ENCODE measurements at regions of chr1 and their contacts with region 1.

Region 1: GRCh38 chr1:119675349-119676345 is 27.6 kb upstream of the ZNF697 start:
- DNase-seq: peak; percentile 92
- H3K4me3 ChIP-seq: peak overlapping the region; percentile 32 to 86 (median 66)
- H3K27ac ChIP-seq: peak overlapping the region; percentile 78
- H3K4me1 ChIP-seq: peaks cover 42% of the 10 kb centered on the region
- H3K27me3 ChIP-seq: peaks cover 4 to 6% of the 10 kb centered on the region in 2 experiments
- CTCF ChIP-seq: peak; percentile 64 to 77
- POLR2A ChIP-seq: no peak

Region 2: GRCh38 chr1:119294722-119295121 is 380.9 kb before region 1 on chr1:
- CTCF ChIA-PET with region 1: no interaction called
- POLR2A ChIA-PET with region 1: no interaction called
- dilution Hi-C with region 1: no loop called
- intact Hi-C with region 1: no loop called
- DNase-seq: no peak
- H3K4me3 ChIP-seq: no peak overlapping the region
- H3K27ac ChIP-seq: no peak overlapping the region
- H3K4me1 ChIP-seq: no peaks in the 10 kb centered on the region
- H3K27me3 ChIP-seq: peaks cover 4 to 7% of the 10 kb centered on the region in 2 experiments
- CTCF ChIP-seq: no peak
- POLR2A ChIP-seq: no peak

Region 3: GRCh38 chr1:119582801-119583200 is 92.8 kb before region 1 on chr1:
- CTCF ChIA-PET with region 1: interaction called, 23 read pairs
- POLR2A ChIA-PET with region 1: no interaction called
- dilution Hi-C with region 1: no loop called
- intact Hi-C with region 1: loop called (anchors 1 kb)
- DNase-seq: peak; percentile 62
- H3K4me3 ChIP-seq: no peak overlapping the region
- H3K27ac ChIP-seq: no peak overlapping the region
- H3K4me1 ChIP-seq: no peaks in the 10 kb centered on the region
- H3K27me3 ChIP-seq: no peaks in the 10 kb centered on the region
- CTCF ChIP-seq: peak; percentile 54 to 67
- POLR2A ChIP-seq: no peak

Region 4: GRCh38 chr1:119647734-119648619 is 27.7 kb before region 1 on chr1 and contains the start of gene ZNF697:
- CTCF ChIA-PET with region 1: interaction called, 110 read pairs
- POLR2A ChIA-PET with region 1: interaction called, 20 read pairs
- dilution Hi-C with region 1: no loop called
- intact Hi-C with region 1: loop called (anchors 1 kb)
- DNase-seq: peak; percentile 98
- H3K4me3 ChIP-seq: peak within 1 kb of the TSS; percentile 53 to 99 (median 70)
- H3K27ac ChIP-seq: peak within 1 kb of the TSS; percentile 91
- H3K4me1 ChIP-seq: peaks cover 29% of the 10 kb centered on the region
- H3K27me3 ChIP-seq: peaks cover 0 to 3% of the 10 kb centered on the region in 2 experiments
- CTCF ChIP-seq: peak in 1 of 2 donors; percentile 71
- POLR2A ChIP-seq: peak; percentile 85
- total RNA-seq, gene ZNF697: 14.1 and 15.0 TPM in 2 replicates

Region 5: GRCh38 chr1:119662034-119662437 is 13.6 kb before region 1 on chr1:
- CTCF ChIA-PET with region 1: interaction called, 75 read pairs
- POLR2A ChIA-PET with region 1: no interaction called
- dilution Hi-C with region 1: no loop called
- intact Hi-C with region 1: no loop called
- DNase-seq: no peak
- H3K4me3 ChIP-seq: no peak overlapping the region
- H3K27ac ChIP-seq: no peak overlapping the region
- H3K4me1 ChIP-seq: no peaks in the 10 kb centered on the region
- H3K27me3 ChIP-seq: no peaks in the 10 kb centered on the region
- CTCF ChIP-seq: no peak
- POLR2A ChIP-seq: no peak

Region 6: GRCh38 chr1:119697598-119697997 is 22.0 kb after region 1 on chr1:
- CTCF ChIA-PET with region 1: no interaction called
- POLR2A ChIA-PET with region 1: no interaction called
- dilution Hi-C with region 1: no loop called
- intact Hi-C with region 1: no loop called
- DNase-seq: no peak
- H3K4me3 ChIP-seq: no peak overlapping the region
- H3K27ac ChIP-seq: no peak overlapping the region
- H3K4me1 ChIP-seq: no peaks in the 10 kb centered on the region
- H3K27me3 ChIP-seq: peaks cover 7% of the 10 kb centered on the region in 2 experiments
- CTCF ChIP-seq: no peak
- POLR2A ChIP-seq: no peak

Region 7: DNA sequence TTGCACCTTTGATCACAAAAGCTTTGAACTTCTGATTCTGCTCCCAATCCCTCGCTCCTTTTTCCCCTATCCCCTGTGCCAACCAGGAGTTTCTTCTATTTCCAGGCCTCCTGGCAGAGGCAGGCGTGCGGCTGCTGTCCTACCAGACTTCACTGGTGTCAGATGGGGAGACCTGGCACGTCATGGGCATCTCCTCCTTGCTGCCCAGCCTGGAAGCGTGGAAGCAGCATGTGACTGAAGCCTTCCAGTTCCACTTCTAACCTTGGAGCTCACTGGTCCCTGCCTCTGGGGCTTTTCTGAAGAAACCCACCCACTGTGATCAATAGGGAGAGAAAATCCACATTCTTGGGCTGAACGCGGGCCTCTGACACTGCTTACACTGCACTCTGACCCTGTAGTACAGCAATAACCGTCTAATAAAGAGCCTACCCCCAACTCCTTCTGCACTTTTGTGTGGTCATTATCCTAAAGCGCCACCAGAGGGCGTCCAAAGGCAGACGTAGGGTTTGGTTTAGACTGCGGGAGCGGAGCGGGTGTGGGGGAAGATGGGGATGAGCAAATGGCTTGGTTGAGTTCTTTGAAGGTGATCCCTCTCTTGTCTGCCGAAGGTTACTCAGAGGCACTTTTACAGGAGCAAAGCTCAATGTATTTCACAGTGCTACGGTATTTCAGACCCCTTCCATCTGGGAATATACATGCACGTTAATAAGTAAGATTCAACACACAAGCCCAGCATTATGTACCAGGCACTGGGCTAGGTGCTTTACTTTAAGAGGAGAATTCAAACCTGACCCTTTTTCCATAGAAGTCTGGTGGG is 68.3 kb after region 1 on chr1:
- CTCF ChIA-PET with region 1: interaction called, 28 read pairs
- POLR2A ChIA-PET with region 1: no interaction called
- dilution Hi-C with region 1: no loop called
- intact Hi-C with region 1: no loop called
- DNase-seq: peak; percentile 60
- H3K4me3 ChIP-seq: no peak overlapping the region
- H3K27ac ChIP-seq: no peak overlapping the region
- H3K4me1 ChIP-seq: no peaks in the 10 kb centered on the region
- H3K27me3 ChIP-seq: peaks cover 0 to 2% of the 10 kb centered on the region in 2 experiments
- CTCF ChIP-seq: peak; percentile 83 to 85
- POLR2A ChIP-seq: no peak